ENCODE measurements at regions of chr17 and their contacts with region 1.

Region 1: GRCh38 chr17:58899065-58899590 is 143.5 kb downstream of the PPM1E start:
- DNase-seq: no peak
- ATAC-seq: no peak
- H3K4me3 ChIP-seq: no peak overlapping the region
- H3K27ac ChIP-seq: no peak overlapping the region
- H3K4me1 ChIP-seq: no peaks in the 10 kb centered on the region
- H3K27me3 ChIP-seq: no peaks in the 10 kb centered on the region

Region 2: DNA sequence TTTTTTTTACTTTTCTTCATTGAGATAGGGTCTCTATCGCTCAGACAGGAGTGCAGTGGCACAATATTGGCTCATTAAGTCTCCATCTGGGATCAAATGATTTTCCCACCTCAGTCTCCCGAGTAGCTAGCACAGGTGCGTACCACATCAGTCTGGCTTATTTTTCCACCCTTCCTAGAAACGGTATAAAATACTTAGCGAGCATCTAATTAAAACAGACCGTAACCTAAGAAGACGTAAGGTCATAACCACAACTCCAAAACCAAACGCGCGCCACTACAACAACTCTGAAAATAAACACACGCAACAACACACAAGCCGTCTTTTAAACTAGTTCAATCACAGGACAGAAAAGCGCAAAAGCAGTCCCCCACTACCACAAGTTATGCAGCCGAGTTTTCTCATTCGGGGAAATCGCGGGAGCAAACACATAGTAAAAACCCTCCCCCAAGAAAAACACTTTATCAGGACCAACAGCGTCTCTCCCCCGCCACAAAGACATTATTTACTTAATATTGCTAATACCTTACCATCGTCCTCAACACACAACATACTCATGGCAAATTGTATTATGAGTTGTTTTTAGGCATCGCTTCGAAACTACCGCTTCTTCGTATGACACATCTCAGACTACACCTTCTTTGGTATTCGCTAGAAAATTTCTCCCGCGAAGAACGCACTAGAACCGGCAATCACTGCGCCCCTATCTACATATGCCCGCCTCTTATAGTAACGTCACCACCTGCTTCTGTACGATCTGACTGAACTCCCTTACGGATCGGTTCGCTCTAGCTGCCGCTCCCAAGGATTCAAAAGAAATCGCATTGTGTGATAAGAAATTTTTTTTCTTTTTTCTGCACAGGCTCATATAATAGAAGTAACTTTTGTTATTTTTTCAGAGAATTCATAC is 240.1 kb before region 1 on chr17:
- intact Hi-C with region 1: no loop called
- DNase-seq: peak; percentile 59 to 75 (median 62)
- ATAC-seq: peak; percentile 97
- H3K4me3 ChIP-seq: peak overlapping the region; percentile 64
- H3K27ac ChIP-seq: peak overlapping the region; percentile 51
- H3K4me1 ChIP-seq: no peaks in the 10 kb centered on the region
- H3K27me3 ChIP-seq: no peaks in the 10 kb centered on the region

Region 3: GRCh38 chr17:58840847-58841592 is 58.1 kb before region 1 on chr17:
- intact Hi-C with region 1: loop called in 1 of 4 experiments (anchors 10 kb)
- DNase-seq: no peak
- ATAC-seq: no peak
- H3K4me3 ChIP-seq: no peak overlapping the region
- H3K27ac ChIP-seq: no peak overlapping the region
- H3K4me1 ChIP-seq: no peaks in the 10 kb centered on the region
- H3K27me3 ChIP-seq: no peaks in the 10 kb centered on the region

Region 4: GRCh38 chr17:58947824-58948223 is 48.7 kb after region 1 on chr17:
- intact Hi-C with region 1: loop called in 1 of 4 experiments (anchors 5 kb)
- DNase-seq: no peak
- ATAC-seq: no peak
- H3K4me3 ChIP-seq: no peak overlapping the region
- H3K27ac ChIP-seq: no peak overlapping the region
- H3K4me1 ChIP-seq: no peaks in the 10 kb centered on the region
- H3K27me3 ChIP-seq: no peaks in the 10 kb centered on the region